ENCODE measurements at regions of chr2 and their contacts with region 1.

Region 1: GRCh38 chr2:148742373-148742772 is 97.8 kb downstream of the EPC2 start:
- DNase-seq: no peak
- H3K4me3 Mint-ChIP-seq: no peak overlapping the region
- H3K27ac Mint-ChIP-seq: no peak overlapping the region
- H3K4me1 Mint-ChIP-seq: peaks cover 12% of the 10 kb centered on the region
- H3K27me3 Mint-ChIP-seq: no peaks in the 10 kb centered on the region

Region 2: DNA sequence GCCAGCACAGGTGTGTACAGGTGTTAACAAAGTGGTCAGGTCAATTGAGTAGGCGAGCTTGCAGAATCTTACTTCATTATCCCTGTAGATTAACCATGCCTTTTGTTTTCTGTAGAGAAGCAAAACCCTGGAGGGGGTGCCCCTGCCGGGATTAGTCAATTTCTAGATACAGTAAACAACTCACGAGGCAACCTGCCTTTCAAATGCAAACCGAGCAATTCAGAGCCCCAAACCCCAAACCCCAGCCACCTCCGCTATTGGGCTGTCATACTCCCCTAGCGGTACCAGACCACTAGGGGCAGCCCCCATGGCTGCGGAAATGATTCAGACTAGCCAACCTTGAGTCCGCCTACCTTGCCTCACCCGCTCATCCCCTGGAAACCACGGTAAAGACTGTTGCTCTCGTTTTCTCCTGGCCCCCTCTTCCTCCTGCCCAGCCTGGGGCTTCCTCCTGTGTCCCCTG is 71.3 kb after region 1 on chr2:
- intact Hi-C with region 1: loop called (anchors 2 kb)
- DNase-seq: peak; percentile 85
- H3K4me3 Mint-ChIP-seq: no peak overlapping the region
- H3K27ac Mint-ChIP-seq: peak overlapping the region; percentile 78
- H3K4me1 Mint-ChIP-seq: peaks cover 17% of the 10 kb centered on the region
- H3K27me3 Mint-ChIP-seq: peaks cover 24% of the 10 kb centered on the region

Region 3: GRCh38 chr2:149021271-149021719 is 278.9 kb after region 1 on chr2:
- intact Hi-C with region 1: no loop called
- DNase-seq: no peak
- H3K4me3 Mint-ChIP-seq: no peak overlapping the region
- H3K27ac Mint-ChIP-seq: no peak overlapping the region
- H3K4me1 Mint-ChIP-seq: peaks cover 6% of the 10 kb centered on the region
- H3K27me3 Mint-ChIP-seq: peaks cover under 1% of the 10 kb centered on the region

Measured in activated CD4-positive, alpha-beta T cell treated with anti-CD3 and anti-CD28 coated beads, Interleukin-2, amount 10 ng/mL, durations not matched to agents 24 days and 14 days (primary cell).